ENCODE measurements at regions of chr6 and their contacts with region 1.

Region 1: GRCh38 chr6:150891888-150892485 is 26.5 kb downstream of the MTHFD1L start:
- DNase-seq: peak; percentile 62
- H3K4me3 ChIP-seq: no peak overlapping the region
- H3K27ac ChIP-seq: no peak overlapping the region
- H3K4me1 ChIP-seq: no peaks in the 10 kb centered on the region
- H3K27me3 ChIP-seq: no peaks in the 10 kb centered on the region
- CTCF ChIP-seq: peak; percentile 61 to 83 (median 81)
- POLR2A ChIP-seq: no peak

Region 2: DNA sequence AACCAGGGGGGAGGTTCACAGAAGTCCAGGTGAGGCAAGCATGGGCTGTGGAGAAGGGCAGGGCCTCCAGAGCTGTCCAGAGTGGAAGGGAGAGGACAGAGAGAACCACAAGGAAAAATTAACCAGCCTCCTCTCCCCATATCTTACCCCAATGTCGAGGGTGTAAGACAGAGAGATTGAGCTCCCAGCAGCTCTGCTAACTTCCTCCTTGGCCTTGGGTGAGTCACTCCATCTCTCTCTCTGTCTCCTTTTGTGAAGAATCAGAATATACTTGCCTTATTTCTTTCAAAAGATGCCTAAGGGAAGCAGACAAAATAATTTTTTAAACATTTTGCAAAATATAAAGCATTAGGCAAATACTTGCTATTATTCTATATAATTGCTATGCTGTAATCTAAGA is 581.4 kb before region 1 on chr6:
- intact Hi-C with region 1: no loop called
- DNase-seq: no peak
- H3K4me3 ChIP-seq: no peak overlapping the region
- H3K27ac ChIP-seq: no peak overlapping the region
- H3K4me1 ChIP-seq: no peaks in the 10 kb centered on the region
- H3K27me3 ChIP-seq: no peaks in the 10 kb centered on the region
- CTCF ChIP-seq: no peak
- POLR2A ChIP-seq: no peak

Region 3: DNA sequence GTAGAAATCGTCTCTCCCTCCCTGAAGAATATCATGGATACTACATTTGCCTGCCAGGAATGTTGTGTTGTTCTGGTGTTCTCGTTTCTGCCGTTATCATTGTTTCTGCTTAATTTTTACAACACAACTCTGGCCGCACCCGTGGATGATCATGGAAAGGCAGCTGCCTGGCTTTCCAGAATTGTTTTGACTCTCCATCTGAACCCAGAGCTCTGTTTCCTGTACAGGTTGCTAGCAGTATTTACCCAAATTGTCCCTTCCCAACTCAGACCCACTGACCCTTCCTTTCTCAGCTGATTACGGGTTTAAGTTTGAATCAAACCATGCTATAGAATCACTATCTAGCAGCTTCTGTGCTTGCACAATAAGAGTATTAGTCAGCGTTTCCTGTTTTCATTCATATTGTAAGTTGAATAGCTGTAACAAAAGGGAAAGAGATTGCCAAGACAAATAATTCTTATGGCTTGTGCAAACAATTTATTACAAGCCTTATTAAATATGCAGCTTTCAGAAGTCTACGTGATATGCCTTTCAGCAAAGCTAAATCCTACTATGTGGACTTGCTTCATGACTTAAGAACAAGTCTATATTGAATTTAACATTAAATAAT is 112.5 kb after region 1 on chr6:
- intact Hi-C with region 1: loop called (anchors 5 kb)
- DNase-seq: peak; percentile 34
- H3K4me3 ChIP-seq: no peak overlapping the region
- H3K27ac ChIP-seq: peak overlapping the region; percentile 2 to 25
- H3K4me1 ChIP-seq: no peaks in the 10 kb centered on the region
- H3K27me3 ChIP-seq: no peaks in the 10 kb centered on the region
- CTCF ChIP-seq: no peak
- POLR2A ChIP-seq: no peak

Region 4: DNA sequence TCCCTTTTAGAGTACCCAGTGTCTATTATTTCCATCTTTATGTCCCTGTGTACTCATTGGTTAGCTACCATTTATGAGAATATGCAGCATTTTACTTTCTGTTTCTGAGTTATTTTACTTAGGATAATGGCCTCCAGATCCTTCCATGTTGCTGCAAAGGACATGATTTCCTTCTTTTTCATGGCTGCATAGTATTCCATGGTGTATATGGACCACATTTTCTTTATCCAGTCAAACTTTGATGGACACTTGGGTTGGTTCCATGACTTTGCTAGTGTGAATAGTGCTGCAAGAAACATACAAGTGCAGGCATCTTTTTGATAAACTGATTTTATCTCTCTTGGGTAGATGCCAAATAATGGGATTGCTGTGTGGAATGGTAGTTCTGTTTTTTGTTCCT is 443.9 kb after region 1 on chr6:
- intact Hi-C with region 1: loop called (anchors 2 kb)
- DNase-seq: no peak
- H3K4me3 ChIP-seq: no peak overlapping the region
- H3K27ac ChIP-seq: no peak overlapping the region
- H3K4me1 ChIP-seq: no peaks in the 10 kb centered on the region
- H3K27me3 ChIP-seq: no peaks in the 10 kb centered on the region
- CTCF ChIP-seq: no peak
- POLR2A ChIP-seq: no peak

Region 5: GRCh38 chr6:151451950-151452749 is 560.2 kb after region 1 on chr6 and contains the start of gene RMND1:
- intact Hi-C with region 1: no loop called
- DNase-seq: peak; percentile 100
- H3K4me3 ChIP-seq: peak within 1 kb of the TSS; percentile 61 to 80
- H3K27ac ChIP-seq: peak within 1 kb of the TSS; percentile 89
- H3K4me1 ChIP-seq: peaks cover 6% of the 10 kb centered on the region
- H3K27me3 ChIP-seq: no peaks in the 10 kb centered on the region
- CTCF ChIP-seq: peak in 2 of 4 experiments; percentile 3 to 10
- POLR2A ChIP-seq: peak; percentile 68
- total RNA-seq, gene RMND1: 17.1 to 22.9 TPM

Measured in prostate gland (tissue), 2 donors.